Dorsolateral prefrontal cortex (tissue), 120 donors: ENCODE measurements at regions of chr11 and their contacts with region 1.

Region 1: DNA sequence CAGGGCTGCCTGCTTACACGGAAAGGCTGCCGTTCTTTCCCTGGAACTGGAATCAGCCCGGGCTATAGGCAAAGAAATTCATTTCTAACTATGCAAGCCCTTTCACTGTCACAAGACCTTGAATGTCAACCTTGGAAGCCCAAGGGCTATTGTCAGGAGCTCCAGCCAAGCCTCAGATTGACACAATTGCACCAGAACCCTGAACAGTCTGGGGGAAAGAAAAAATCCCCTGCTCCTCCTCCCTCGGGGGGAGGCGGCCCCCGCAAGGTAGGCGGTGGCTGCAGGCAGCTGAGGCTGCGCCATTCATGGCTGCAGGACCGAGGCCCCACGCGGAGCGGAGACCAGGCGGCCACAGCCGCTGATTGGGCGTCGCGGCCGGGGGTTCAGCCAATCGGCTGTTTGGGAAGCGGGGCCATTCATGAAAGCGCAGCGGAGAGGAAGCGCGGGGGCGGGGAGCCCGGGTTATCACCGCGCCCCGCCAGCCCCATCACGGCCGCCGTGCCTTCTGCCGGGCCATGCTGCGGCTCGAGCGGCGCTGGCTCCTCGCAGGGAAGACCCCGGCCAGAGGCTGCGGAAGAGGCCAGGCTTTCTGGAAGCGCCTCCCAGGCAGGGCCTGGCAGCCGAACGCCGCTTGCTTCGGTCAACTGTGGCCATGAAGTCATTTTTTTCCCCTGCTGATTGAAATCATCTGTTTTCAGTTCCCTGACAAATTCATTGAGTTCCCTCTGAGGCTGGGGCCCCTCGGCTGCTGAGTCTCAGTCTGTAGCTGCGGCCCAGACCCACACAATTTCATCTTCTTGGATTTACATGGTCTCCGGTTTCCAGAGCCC is 38.1 kb upstream of the LINC01488 start:
- DNase-seq: peak; percentile 71 to 93 (median 88)
- H3K4me3 ChIP-seq: peak overlapping the region; percentile 40 to 74 (median 61)
- H3K27ac ChIP-seq: peak overlapping the region in 55 of 59 donors; percentile 1 to 90 (median 74)
- H3K27me3 ChIP-seq: no peaks in the 10 kb centered on the region
- CTCF ChIP-seq: peak in 15 of 56 donors; percentile 8 to 40 (median 20)

Region 2: GRCh38 chr11:69101115-69101791 is 342.1 kb before region 1 on chr11:
- intact Hi-C with region 1: loop called in 1 of 2 experiments (anchors 5 kb)
- DNase-seq: peak; percentile 54 to 80 (median 64)
- H3K4me3 ChIP-seq: no peak overlapping the region
- H3K27ac ChIP-seq: no peak overlapping the region
- H3K27me3 ChIP-seq: peaks cover 0 to 21% (median 0%) of the 10 kb centered on the region in 45 donors
- CTCF ChIP-seq: peak; percentile 92 to 100 (median 99)

Region 3: DNA sequence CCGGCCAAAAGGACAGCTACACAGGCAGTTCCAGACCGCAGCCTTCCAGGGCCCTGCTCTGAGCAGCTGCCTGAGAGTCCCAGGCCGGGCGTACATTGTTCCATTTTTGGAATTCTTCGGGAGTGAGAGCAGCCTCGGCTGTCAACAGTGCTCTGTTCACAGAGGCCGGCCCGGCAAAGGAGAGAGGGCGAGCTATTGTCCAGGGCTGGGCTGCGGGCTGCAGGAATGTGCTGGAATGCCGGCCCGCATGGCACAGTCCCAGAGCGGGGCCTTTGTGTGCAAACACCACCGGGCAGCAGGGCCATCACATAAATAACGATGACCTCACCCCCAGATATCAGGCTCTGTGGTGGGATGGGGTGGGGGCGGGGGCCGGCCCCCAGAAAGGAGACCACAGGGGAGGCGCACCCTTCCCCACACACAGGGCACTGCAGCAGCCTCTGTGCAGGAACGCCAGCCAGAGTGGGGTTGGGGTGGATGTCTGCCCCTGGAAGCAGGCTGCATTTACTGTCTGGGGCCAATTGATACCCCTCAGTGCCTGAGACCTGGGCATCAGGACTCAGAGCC is 54.0 kb after region 1 on chr11:
- intact Hi-C with region 1: loop called in 1 of 2 experiments (anchors 2 kb)
- DNase-seq: peak in 9 of 10 donors; percentile 27 to 77 (median 53)
- H3K4me3 ChIP-seq: peak overlapping the region in 1 of 59 donors; percentile 11
- H3K27ac ChIP-seq: peak overlapping the region in 28 of 59 donors; percentile 11 to 86 (median 51)
- H3K27me3 ChIP-seq: no peaks in the 10 kb centered on the region
- CTCF ChIP-seq: no peak